CD4-positive, alpha-beta T cell (primary cell): ENCODE measurements at regions of chr15 and their contacts with region 1.

Region 1: GRCh38 chr15:81274931-81275707 is 48.8 kb downstream of the STARD5 start:
- DNase-seq: peak; percentile 53 to 93 (median 79)
- ATAC-seq: peak; percentile 96
- H3K4me3 ChIP-seq: no peak overlapping the region
- H3K4me3 Mint-ChIP-seq: peak overlapping the region; percentile 62
- H3K27ac ChIP-seq: no peak overlapping the region
- H3K27ac Mint-ChIP-seq: peak overlapping the region; percentile 82
- H3K4me1 ChIP-seq: peaks cover 19% of the 10 kb centered on the region
- H3K4me1 Mint-ChIP-seq: peaks cover 55% of the 10 kb centered on the region
- H3K27me3 ChIP-seq: no peaks in the 10 kb centered on the region
- H3K27me3 Mint-ChIP-seq: no peaks in the 10 kb centered on the region
- CTCF ChIP-seq: peak; percentile 74

Region 2: GRCh38 chr15:81296673-81297072 is 21.6 kb after region 1 on chr15:
- CTCF ChIA-PET with region 1: interaction called, 57 read pairs
- POLR2A ChIA-PET with region 1: interaction called, 396 read pairs
- intact Hi-C with region 1: loop called (anchors 2 kb)
- DNase-seq: peak; percentile 57 to 93 (median 73)
- ATAC-seq: peak; percentile 45
- H3K4me3 ChIP-seq: peak overlapping the region; percentile 96
- H3K4me3 Mint-ChIP-seq: peak overlapping the region; percentile 99
- H3K27ac ChIP-seq: peak overlapping the region; percentile 94 to 95
- H3K27ac Mint-ChIP-seq: peak overlapping the region; percentile 92
- H3K4me1 ChIP-seq: peaks cover 73% of the 10 kb centered on the region
- H3K4me1 Mint-ChIP-seq: peaks cover 68% of the 10 kb centered on the region
- H3K27me3 ChIP-seq: no peaks in the 10 kb centered on the region
- H3K27me3 Mint-ChIP-seq: no peaks in the 10 kb centered on the region
- CTCF ChIP-seq: no peak

Region 3: DNA sequence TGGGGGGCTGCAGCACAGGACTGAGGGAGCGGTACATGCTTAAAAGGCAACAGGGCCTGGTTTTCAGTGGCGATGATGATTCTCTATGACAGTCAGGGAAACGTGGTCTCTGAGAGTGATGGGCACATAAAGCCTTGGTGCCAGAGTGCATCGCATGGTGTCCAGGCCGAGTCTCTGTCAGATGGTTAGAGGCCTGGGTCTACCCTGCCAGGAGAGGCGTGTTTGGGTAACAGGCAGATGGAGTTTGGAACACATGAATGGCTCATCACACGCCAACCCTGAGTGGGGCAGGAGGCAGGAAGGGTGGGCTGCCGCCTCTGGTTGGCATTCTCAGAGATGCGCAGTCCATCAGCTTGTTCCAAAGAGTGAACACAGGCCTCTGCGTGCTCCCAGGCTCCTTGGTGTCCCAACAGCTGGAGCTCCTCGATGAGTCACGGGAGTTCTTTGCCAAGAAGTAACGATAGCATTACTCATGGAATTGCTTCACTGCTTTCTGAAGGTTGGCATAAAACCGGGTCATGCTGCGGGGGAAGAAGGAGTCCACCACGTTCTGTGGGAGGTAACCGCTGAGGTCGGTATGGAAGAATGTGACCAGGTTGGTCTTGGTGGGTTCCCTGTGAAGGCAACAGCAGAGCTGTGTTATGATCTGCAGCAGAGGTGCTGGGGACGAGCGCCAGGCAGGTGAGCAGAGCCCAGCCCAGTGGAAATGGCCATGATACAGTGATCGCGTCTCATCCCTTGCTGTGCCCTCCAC is 37.8 kb after region 1 on chr15:
- CTCF ChIA-PET with region 1: interaction called, 10 read pairs
- POLR2A ChIA-PET with region 1: interaction called, 396 read pairs
- intact Hi-C with region 1: no loop called
- DNase-seq: peak in 2 of 14 experiments; percentile 59 to 69
- ATAC-seq: no peak
- H3K4me3 ChIP-seq: no peak overlapping the region
- H3K4me3 Mint-ChIP-seq: no peak overlapping the region
- H3K27ac ChIP-seq: peak overlapping the region in 1 of 2 donors; percentile 67
- H3K27ac Mint-ChIP-seq: peak overlapping the region; percentile 92
- H3K4me1 ChIP-seq: peaks cover 68% of the 10 kb centered on the region
- H3K4me1 Mint-ChIP-seq: peaks cover 85% of the 10 kb centered on the region
- H3K27me3 ChIP-seq: no peaks in the 10 kb centered on the region
- H3K27me3 Mint-ChIP-seq: no peaks in the 10 kb centered on the region
- CTCF ChIP-seq: no peak

Region 4: DNA sequence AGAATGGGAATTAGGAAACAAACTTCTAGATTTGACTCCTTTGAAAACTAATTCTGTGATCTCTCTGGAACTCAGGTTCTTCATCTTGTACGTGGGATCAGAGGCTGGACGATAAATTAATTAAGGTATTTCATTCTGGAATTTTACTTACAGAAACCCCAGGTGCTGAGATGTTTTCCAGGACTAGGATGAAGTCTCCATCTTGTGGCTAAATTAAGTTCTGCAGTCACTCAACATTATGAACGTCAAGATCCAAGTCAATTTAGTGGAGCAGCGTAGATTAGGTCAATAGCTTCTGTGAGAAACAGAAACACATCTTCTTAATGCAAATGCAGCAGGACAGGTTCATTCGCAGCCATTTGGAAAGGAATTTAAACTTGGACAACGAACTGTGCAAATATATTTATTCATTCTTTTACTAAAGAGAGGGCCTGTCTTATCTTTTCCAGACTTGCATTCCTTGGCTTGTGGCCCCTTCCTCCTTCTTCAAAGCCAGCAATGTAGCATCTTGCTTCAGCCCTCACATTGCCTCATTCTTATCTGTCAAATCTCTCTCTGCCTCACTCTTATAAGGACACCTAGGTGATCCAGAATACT is 125.6 kb after region 1 on chr15:
- CTCF ChIA-PET with region 1: interaction called, 9 read pairs
- POLR2A ChIA-PET with region 1: interaction called, 5 read pairs
- intact Hi-C with region 1: loop called (anchors 1 kb)
- DNase-seq: peak in 4 of 14 experiments; percentile 5 to 77 (median 66)
- ATAC-seq: peak; percentile 41
- H3K4me3 ChIP-seq: no peak overlapping the region
- H3K4me3 Mint-ChIP-seq: no peak overlapping the region
- H3K27ac ChIP-seq: no peak overlapping the region
- H3K27ac Mint-ChIP-seq: no peak overlapping the region
- H3K4me1 ChIP-seq: no peaks in the 10 kb centered on the region
- H3K4me1 Mint-ChIP-seq: no peaks in the 10 kb centered on the region
- H3K27me3 ChIP-seq: no peaks in the 10 kb centered on the region
- H3K27me3 Mint-ChIP-seq: peaks cover 6% of the 10 kb centered on the region
- CTCF ChIP-seq: peak; percentile 81

Region 5: GRCh38 chr15:81480645-81481053 is 205.5 kb after region 1 on chr15:
- CTCF ChIA-PET with region 1: no interaction called
- POLR2A ChIA-PET with region 1: no interaction called
- intact Hi-C with region 1: loop called (anchors 1 to 10 kb)
- DNase-seq: peak in 6 of 14 experiments; percentile 4 to 68 (median 38)
- ATAC-seq: peak; percentile 44
- H3K4me3 ChIP-seq: no peak overlapping the region
- H3K4me3 Mint-ChIP-seq: no peak overlapping the region
- H3K27ac ChIP-seq: no peak overlapping the region
- H3K27ac Mint-ChIP-seq: no peak overlapping the region
- H3K4me1 ChIP-seq: no peaks in the 10 kb centered on the region
- H3K4me1 Mint-ChIP-seq: no peaks in the 10 kb centered on the region
- H3K27me3 ChIP-seq: no peaks in the 10 kb centered on the region
- H3K27me3 Mint-ChIP-seq: peaks cover 8% of the 10 kb centered on the region
- CTCF ChIP-seq: peak; percentile 95

Region 6: GRCh38 chr15:81633889-81634288 is 358.8 kb after region 1 on chr15:
- CTCF ChIA-PET with region 1: no interaction called
- POLR2A ChIA-PET with region 1: no interaction called
- intact Hi-C with region 1: no loop called
- DNase-seq: no peak
- ATAC-seq: no peak
- H3K4me3 ChIP-seq: no peak overlapping the region
- H3K4me3 Mint-ChIP-seq: no peak overlapping the region
- H3K27ac ChIP-seq: no peak overlapping the region
- H3K27ac Mint-ChIP-seq: no peak overlapping the region
- H3K4me1 ChIP-seq: no peaks in the 10 kb centered on the region
- H3K4me1 Mint-ChIP-seq: no peaks in the 10 kb centered on the region
- H3K27me3 ChIP-seq: peaks cover 0 to 3% of the 10 kb centered on the region in 2 experiments
- H3K27me3 Mint-ChIP-seq: no peaks in the 10 kb centered on the region
- CTCF ChIP-seq: no peak